ENCODE measurements at regions of chr14 and their contacts with region 1.

Region 1: DNA sequence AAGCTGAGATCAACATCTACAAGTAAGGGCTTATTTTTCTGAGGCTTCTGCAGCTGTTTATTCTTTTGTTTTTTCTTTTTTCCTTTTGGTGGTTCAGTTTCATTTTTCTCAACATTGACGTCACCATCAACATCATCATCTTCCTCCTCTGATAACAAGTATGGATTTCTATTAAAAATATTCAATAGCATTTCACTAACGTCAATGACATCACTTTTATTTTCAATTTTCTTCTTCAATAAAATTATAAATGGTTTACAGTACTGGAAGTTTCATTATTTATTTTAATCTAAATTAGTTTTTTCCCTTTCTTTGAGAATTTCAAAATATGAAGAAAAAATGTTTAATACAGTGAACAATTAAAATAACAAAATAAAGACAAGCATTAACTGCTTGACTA is 23.9 kb downstream of the NEMF start:
- DNase-seq: no peak
- ATAC-seq: no peak
- H3K4me3 ChIP-seq: no peak overlapping the region
- H3K27ac ChIP-seq: no peak overlapping the region
- H3K4me1 ChIP-seq: no peaks in the 10 kb centered on the region
- H3K27me3 ChIP-seq: no peaks in the 10 kb centered on the region
- CTCF ChIP-seq: no peak
- POLR2A ChIP-seq: no peak

Region 2: DNA sequence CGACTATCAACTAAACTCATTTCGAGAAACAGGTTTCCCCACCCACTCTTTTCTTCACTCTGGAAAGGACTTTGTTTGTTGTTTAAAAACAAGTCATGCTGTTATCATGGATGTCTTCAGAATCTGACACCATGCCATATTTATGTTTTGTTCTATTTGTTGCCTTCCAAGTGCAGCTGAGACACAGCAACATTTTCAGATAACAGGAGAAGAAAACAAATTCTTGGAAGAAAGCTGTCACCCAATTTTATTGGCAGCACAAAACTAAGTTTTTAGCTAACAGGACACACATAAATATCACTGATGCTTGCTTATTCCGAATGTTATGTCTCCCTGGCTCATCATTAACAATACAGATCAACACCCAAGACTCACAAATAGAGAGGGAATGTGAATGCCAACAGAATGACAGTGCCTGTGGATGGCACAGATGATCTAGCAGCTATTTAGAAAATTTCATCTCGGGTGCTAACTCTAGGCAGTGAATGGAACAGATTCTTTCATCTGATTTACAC is 390.3 kb before region 1 on chr14:
- intact Hi-C with region 1: no loop called
- DNase-seq: no peak
- ATAC-seq: no peak
- H3K4me3 ChIP-seq: no peak overlapping the region
- H3K27ac ChIP-seq: no peak overlapping the region
- H3K4me1 ChIP-seq: no peaks in the 10 kb centered on the region
- H3K27me3 ChIP-seq: peaks cover 0 to 5% (median 0%) of the 10 kb centered on the region in 9 donors
- CTCF ChIP-seq: no peak
- POLR2A ChIP-seq: no peak

Region 3: GRCh38 chr14:49786315-49787110 is 42.1 kb before region 1 on chr14:
- intact Hi-C with region 1: loop called in 5 of 10 experiments (anchors 5 to 10 kb)
- DNase-seq: no peak
- ATAC-seq: no peak
- H3K4me3 ChIP-seq: no peak overlapping the region
- H3K27ac ChIP-seq: no peak overlapping the region
- H3K4me1 ChIP-seq: no peaks in the 10 kb centered on the region
- H3K27me3 ChIP-seq: no peaks in the 10 kb centered on the region
- CTCF ChIP-seq: no peak
- POLR2A ChIP-seq: no peak

Region 4: DNA sequence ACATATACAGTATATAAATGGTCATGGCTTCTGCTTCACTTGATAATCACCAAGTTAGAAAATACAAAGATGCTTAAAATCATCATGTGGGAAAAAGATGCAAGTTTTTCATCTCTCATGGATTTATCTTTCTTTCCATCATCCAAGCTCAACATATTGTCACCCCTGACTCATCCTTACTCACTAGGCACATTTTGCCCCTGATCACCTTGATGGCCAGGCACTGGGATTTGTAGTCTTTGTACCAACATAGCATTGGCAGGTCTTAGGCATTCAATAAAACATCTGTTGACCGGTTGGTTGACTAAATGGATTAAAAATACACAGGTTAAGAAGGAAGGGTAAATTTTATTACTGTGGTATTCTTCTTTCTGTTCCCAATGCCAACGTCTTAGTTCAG is 32.6 kb before region 1 on chr14:
- intact Hi-C with region 1: loop called in 2 of 10 experiments (anchors 5 kb)
- DNase-seq: no peak
- ATAC-seq: no peak
- H3K4me3 ChIP-seq: no peak overlapping the region
- H3K27ac ChIP-seq: no peak overlapping the region
- H3K4me1 ChIP-seq: peaks cover 0 to 7% (median 0%) of the 10 kb centered on the region in 12 donors
- H3K27me3 ChIP-seq: no peaks in the 10 kb centered on the region
- CTCF ChIP-seq: no peak
- POLR2A ChIP-seq: no peak